Motor neuron (in vitro differentiated cells): ENCODE measurements at regions of chr13 and their contacts with region 1.

Region 1: DNA sequence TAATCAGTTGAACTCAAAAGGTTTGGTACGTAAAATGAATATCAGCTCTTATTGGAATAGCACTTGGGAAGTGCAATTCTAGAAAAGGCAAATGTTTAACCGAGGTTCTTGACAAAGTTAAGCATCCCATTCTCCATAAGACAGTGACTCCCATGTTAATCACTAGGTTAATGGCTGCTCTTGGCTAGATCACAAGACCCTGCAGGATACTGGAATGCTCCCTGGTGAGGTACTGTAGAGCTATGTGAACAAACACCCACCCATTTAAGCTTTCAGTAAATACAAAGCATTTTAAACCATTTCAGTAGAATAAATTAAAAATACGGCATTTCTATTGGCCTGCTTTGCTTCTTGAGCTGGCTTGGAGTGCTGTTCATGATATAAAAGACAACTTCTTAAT is 56.5 kb downstream of the TDRD3 start:
- ATAC-seq: no peak
- H3K4me3 ChIP-seq: no peak overlapping the region
- H3K27ac ChIP-seq: no peak overlapping the region
- H3K4me1 ChIP-seq: no peaks in the 10 kb centered on the region

Region 2: GRCh38 chr13:60066226-60066625 is 387.3 kb before region 1 on chr13:
- in situ Hi-C with region 1: no loop called
- ATAC-seq: no peak
- H3K4me3 ChIP-seq: no peak overlapping the region
- H3K27ac ChIP-seq: no peak overlapping the region
- H3K4me1 ChIP-seq: no peaks in the 10 kb centered on the region

Region 3: DNA sequence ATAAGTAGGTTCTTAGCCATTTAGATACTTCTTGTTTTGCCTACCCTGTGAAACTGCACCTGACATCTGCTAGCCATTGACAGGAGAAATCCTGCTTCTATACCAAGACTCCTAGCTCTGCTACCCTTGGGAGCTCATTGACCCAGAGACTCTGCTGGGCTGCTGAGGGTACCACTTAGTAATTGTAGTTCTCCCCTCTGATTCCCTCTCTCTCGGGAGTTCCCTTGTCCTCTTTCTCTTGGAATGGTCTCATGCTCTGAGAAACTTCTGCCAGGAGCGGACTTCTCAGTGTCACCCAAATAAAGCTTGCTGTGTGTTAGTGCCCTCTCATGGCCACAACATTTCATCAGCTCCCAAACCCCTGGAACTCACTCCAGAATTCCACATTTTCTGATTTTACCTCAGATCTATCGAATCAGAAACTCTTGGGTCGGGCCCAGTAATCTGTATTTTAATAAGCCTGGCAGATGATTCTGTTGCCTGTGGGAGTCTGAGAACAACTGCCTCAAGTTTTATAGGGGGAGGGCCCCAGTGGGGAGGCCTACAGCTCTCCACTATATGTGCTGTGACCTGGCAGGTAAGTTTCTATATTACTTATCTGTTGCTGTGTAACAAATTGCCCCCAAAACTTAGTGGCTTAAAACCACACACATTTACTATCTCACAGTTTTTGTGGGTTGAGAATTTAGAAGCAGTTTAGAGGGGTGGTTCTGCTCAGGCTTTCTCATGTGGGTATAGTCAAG is 164.7 kb after region 1 on chr13:
- in situ Hi-C with region 1: loop called in 1 of 9 experiments (anchors 25 kb)
- ATAC-seq: peak in 4 of 8 experiments; percentile 60 to 95 (median 93)
- H3K4me3 ChIP-seq: no peak overlapping the region
- H3K27ac ChIP-seq: no peak overlapping the region
- H3K4me1 ChIP-seq: no peaks in the 10 kb centered on the region

Region 4: GRCh38 chr13:61927648-61928047 is 1474.2 kb after region 1 on chr13:
- in situ Hi-C with region 1: loop called in 1 of 9 experiments (anchors 25 kb)
- ATAC-seq: no peak
- H3K4me3 ChIP-seq: no peak overlapping the region
- H3K27ac ChIP-seq: no peak overlapping the region
- H3K4me1 ChIP-seq: peaks cover 0 to 7% of the 10 kb centered on the region in 2 donors